A673 (cell line): ENCODE measurements at regions of chr16 and their contacts with region 1.

Region 1: GRCh38 chr16:29805378-29806098 is 791 bp upstream of the MAZ start:
- DNase-seq: peak; percentile 99
- H3K4me3 ChIP-seq: peak overlapping the region; percentile 64
- H3K27ac ChIP-seq: peak overlapping the region; percentile 89
- H3K4me1 ChIP-seq: peaks cover 29% of the 10 kb centered on the region
- H3K27me3 ChIP-seq: no peaks in the 10 kb centered on the region
- CTCF ChIP-seq: no peak

Region 2: DNA sequence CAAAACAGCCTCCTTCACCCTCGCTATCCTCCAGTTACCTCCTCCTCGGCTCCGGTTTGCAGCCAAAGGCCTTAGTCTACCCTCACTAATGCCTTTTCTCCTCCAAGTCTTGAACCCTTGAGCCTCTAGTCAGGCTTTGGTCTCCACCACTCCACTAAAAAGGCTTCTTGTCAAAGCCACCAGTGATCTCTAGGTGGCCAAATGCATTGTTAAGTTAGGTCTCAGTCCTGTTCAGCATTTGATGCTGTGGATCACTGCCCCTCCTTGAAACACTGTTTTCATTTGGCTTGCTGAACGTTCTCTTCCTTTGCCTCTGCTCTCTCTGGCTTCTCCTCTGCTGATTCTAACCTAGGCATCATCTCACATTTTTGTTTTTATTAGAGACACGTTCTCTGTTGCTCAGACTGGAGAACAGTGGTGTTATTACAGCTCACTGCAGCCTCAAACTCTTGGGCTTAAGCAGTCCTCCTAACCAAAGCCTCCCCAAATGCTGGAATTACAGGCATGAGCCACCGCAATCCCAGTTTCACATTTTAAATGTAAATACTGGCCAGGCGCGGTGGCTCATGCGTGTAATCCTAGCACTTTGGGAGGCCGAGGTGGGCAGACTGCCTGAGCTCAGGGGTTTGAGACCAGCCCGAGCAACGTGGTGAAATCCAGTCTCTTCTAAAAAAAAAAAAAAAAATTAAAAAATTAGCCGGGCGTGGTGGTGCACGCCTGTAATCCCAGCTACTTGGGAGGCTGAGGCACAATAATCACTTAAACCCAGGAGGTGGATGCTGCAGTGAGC is 1250.7 kb before region 1 on chr16:
- CTCF ChIA-PET with region 1: no interaction called
- POLR2A ChIA-PET with region 1: interaction called, 13 read pairs
- intact Hi-C with region 1: no loop called
- DNase-seq: no peak
- H3K4me3 ChIP-seq: peak overlapping the region; percentile 49
- H3K27ac ChIP-seq: peak overlapping the region; percentile 50
- H3K4me1 ChIP-seq: no peaks in the 10 kb centered on the region
- H3K27me3 ChIP-seq: no peaks in the 10 kb centered on the region
- CTCF ChIP-seq: no peak

Region 3: DNA sequence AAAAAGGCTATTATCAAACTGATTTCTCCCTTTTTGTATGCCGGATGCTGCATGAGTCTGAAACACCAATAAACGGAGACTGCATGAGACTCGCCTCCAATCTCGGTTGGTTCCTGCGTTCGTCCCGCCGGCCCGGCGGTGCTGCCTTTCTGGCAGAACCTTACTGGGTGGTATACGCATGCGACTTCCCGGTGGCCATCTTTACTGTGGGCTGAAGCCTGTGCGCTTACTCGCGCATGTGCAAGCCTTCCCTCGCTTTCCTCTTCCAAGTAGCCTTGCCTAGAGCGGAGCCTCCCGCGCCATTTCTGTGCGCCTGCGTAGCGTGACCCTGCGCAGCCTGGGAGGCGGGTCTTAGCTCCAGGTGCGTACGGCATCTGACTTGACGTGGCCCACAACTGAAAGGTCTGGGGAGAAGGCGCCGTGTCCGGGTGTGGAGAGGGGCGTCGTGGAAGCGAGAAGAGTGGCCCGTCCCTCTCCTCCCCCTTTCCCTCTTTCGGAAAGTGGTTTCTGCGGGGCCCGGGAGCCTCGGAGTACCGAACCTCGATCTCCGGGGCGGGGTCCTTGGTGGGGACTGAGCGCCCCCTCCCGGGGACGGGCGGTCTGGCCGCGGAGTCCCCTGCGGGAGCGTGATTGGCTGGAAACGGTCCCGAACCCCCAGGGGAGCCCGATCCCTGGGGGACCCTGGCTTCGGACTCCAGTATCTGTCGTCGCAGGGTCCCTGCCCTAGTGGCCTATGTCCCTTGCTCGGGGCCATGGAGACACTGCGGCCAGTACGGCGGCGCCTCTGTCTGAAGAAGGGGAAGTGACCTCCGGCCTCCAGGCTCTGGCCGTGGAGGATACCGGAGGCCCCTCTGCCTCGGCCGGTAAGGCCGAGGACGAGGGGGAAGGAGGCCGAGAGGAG is 10.5 kb after region 1 on chr16 and contains the start of gene PAGR1:
- CTCF ChIA-PET with region 1: interaction called, 22 read pairs
- POLR2A ChIA-PET with region 1: no interaction called
- intact Hi-C with region 1: no loop called
- DNase-seq: peak; percentile 99
- H3K4me3 ChIP-seq: peak within 1 kb of the TSS; percentile 87
- H3K27ac ChIP-seq: peak within 1 kb of the TSS; percentile 92
- H3K4me1 ChIP-seq: peaks cover 48% of the 10 kb centered on the region
- H3K27me3 ChIP-seq: no peaks in the 10 kb centered on the region
- CTCF ChIP-seq: peak; percentile 93
- total RNA-seq, gene PAGR1: 47.4 and 50.0 TPM in 2 replicates

Region 4: GRCh38 chr16:29868396-29869009 is 63.0 kb after region 1 on chr16:
- CTCF ChIA-PET with region 1: interaction called, 7 read pairs
- POLR2A ChIA-PET with region 1: interaction called, 11 read pairs
- intact Hi-C with region 1: loop called (anchors 10 kb)
- DNase-seq: no peak
- H3K4me3 ChIP-seq: no peak overlapping the region
- H3K27ac ChIP-seq: no peak overlapping the region
- H3K4me1 ChIP-seq: peaks cover 4% of the 10 kb centered on the region
- H3K27me3 ChIP-seq: no peaks in the 10 kb centered on the region
- CTCF ChIP-seq: no peak

Region 5: GRCh38 chr16:30018731-30019158 is 213.2 kb after region 1 on chr16:
- CTCF ChIA-PET with region 1: interaction called, 3 read pairs
- POLR2A ChIA-PET with region 1: no interaction called
- intact Hi-C with region 1: loop called (anchors 2 kb)
- DNase-seq: no peak
- H3K4me3 ChIP-seq: no peak overlapping the region
- H3K27ac ChIP-seq: no peak overlapping the region
- H3K4me1 ChIP-seq: no peaks in the 10 kb centered on the region
- H3K27me3 ChIP-seq: no peaks in the 10 kb centered on the region
- CTCF ChIP-seq: no peak

Region 6: DNA sequence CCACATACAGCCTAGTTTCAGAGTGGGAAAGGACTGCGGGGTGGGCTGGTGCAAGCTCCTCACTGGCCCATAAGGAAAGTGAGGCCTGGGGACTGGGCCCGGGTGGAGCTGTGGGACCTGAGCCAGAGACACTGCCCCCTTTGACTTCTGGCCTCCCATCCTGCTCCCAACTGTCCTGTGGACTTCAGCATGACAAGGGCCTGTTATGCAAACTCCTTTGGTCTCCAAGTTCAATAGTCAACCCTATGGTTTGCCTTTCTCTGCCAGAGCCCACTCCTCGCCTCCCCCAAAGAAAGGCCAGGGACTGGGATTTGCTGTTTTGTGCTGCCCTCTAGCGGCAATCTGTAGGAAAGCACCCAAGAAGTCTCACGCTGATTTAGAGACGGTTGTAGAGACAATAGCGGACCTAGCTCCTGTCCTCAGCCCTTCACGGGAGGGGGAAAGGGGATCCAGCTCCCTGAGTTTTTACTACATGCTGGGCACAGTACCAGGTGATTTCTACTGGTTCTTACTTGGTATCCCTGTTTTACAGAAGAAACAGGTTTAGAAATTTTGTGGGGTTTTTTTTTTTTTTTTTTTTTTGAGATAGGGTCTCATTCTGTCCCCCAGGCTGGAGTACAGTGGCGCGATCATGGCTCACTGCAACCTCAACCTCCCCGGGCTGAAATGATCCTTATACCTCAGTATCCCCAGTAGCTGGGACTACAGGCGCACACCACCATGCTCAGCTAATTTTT is 226.7 kb after region 1 on chr16:
- CTCF ChIA-PET with region 1: interaction called, 5 read pairs
- POLR2A ChIA-PET with region 1: interaction called, 17 read pairs
- intact Hi-C with region 1: no loop called
- DNase-seq: peak; percentile 85
- H3K4me3 ChIP-seq: no peak overlapping the region
- H3K27ac ChIP-seq: no peak overlapping the region
- H3K4me1 ChIP-seq: no peaks in the 10 kb centered on the region
- H3K27me3 ChIP-seq: no peaks in the 10 kb centered on the region
- CTCF ChIP-seq: peak; percentile 94